Activated T-helper 2 cell treated with anti-CD3 and anti-CD28 coated beads, Interferon-gamma antibody, Interleukin-2, Interleukin-4, amounts not matched to agents 10 μg/mL and 5 μg/mL and 100 μg/mL, durations not matched to agents 14 hours and 24 hours and 36 hours (primary cell): ENCODE measurements at regions of chr10 and their contacts with region 1.

Region 1: GRCh38 chr10:30722956-30723620 is 93.5 kb upstream of the LYZL2 start:
- DNase-seq: no peak
- H3K4me3 Mint-ChIP-seq: no peak overlapping the region
- H3K27ac Mint-ChIP-seq: no peak overlapping the region
- H3K4me1 Mint-ChIP-seq: peaks cover 27% of the 10 kb centered on the region
- H3K27me3 Mint-ChIP-seq: no peaks in the 10 kb centered on the region

Region 2: GRCh38 chr10:30324448-30325110 is 398.5 kb before region 1 on chr10:
- intact Hi-C with region 1: no loop called
- DNase-seq: no peak
- H3K4me3 Mint-ChIP-seq: no peak overlapping the region
- H3K27ac Mint-ChIP-seq: no peak overlapping the region
- H3K4me1 Mint-ChIP-seq: peaks cover 3% of the 10 kb centered on the region
- H3K27me3 Mint-ChIP-seq: no peaks in the 10 kb centered on the region

Region 3: GRCh38 chr10:30671026-30671616 is 52.0 kb before region 1 on chr10:
- intact Hi-C with region 1: loop called (anchors 5 kb)
- DNase-seq: no peak
- H3K4me3 Mint-ChIP-seq: peak overlapping the region; percentile 27
- H3K27ac Mint-ChIP-seq: peak overlapping the region; percentile 36
- H3K4me1 Mint-ChIP-seq: peaks cover 25% of the 10 kb centered on the region
- H3K27me3 Mint-ChIP-seq: peaks cover 5% of the 10 kb centered on the region

Region 4: DNA sequence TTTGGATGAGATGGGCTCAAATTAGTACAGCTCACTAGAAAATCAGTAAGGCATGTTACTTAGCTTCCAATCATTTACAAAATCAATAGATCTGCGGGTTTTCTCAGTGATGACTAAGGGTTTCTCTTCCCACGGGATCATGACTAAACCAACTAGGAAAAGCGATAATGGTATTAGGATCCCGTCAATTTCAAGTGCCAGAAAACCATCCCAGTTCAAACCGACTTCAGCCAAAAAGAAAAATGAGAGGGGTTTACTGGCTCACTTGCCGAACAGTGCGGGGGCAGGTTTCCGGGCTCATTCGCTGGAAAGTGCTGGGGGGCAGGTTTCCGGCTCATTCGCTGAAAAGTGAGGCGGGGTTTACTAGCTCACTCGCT is 31.5 kb before region 1 on chr10:
- intact Hi-C with region 1: no loop called
- DNase-seq: no peak
- H3K4me3 Mint-ChIP-seq: no peak overlapping the region
- H3K27ac Mint-ChIP-seq: peak overlapping the region; percentile 63
- H3K4me1 Mint-ChIP-seq: peaks cover 75% of the 10 kb centered on the region
- H3K27me3 Mint-ChIP-seq: no peaks in the 10 kb centered on the region

Region 5: GRCh38 chr10:31004611-31005193 is 281.6 kb after region 1 on chr10:
- intact Hi-C with region 1: no loop called
- DNase-seq: no peak
- H3K4me3 Mint-ChIP-seq: no peak overlapping the region
- H3K27ac Mint-ChIP-seq: peak overlapping the region; percentile 7
- H3K4me1 Mint-ChIP-seq: peaks cover 45% of the 10 kb centered on the region
- H3K27me3 Mint-ChIP-seq: no peaks in the 10 kb centered on the region

Region 6: GRCh38 chr10:31083765-31084184 is 360.7 kb after region 1 on chr10:
- intact Hi-C with region 1: loop called (anchors 10 kb)
- DNase-seq: peak; percentile 55
- H3K4me3 Mint-ChIP-seq: no peak overlapping the region
- H3K27ac Mint-ChIP-seq: no peak overlapping the region
- H3K4me1 Mint-ChIP-seq: peaks cover 13% of the 10 kb centered on the region
- H3K27me3 Mint-ChIP-seq: no peaks in the 10 kb centered on the region

Region 7: DNA sequence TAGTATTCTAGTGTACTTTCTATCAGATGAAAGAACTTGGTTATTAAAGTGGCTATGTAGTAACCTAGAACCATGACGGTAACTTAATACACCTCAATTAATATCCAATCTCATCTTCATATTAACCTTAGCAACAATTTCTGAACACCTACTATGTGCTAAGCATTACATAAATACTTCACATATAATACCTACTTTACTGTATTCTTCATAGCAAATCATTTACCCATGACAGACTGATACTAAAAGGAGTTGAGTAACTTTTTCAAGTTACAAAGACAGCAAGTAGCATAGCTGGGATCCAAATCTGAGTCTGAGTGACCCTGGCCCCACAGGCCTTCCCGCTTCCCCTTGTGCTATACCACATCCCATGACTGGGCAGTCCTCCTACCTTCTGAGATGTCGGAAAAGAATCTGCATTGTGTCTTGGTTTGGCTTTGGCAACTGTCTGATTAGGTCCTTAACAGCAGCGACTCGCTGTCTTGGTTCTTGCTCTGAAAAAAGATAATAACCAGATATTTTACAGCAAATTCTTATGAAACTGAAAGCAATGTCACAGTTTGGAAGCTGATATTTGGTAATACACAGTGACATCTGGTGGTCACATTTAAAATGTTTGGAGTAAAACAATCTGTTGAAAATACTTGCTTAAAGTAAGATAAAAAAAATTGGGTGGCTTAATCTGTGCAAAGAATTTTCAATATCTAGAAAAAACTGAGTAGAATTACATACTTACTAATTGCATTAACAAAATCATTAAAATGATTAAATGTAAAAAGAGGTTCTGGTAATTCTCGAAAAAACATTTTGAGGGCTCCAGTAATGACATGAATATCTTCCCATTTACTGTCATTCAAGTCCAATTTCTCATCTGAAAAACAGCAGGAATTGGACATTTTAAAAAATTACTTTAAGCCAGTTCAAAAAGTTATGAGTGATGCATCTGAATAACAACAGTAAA is 1085.5 kb after region 1 on chr10:
- intact Hi-C with region 1: loop called (anchors 1 kb)
- DNase-seq: peak; percentile 11
- H3K4me3 Mint-ChIP-seq: peak overlapping the region; percentile 76
- H3K27ac Mint-ChIP-seq: peak overlapping the region; percentile 84
- H3K4me1 Mint-ChIP-seq: peaks cover 7% of the 10 kb centered on the region
- H3K27me3 Mint-ChIP-seq: no peaks in the 10 kb centered on the region